Prostate gland (tissue), 2 donors: ENCODE measurements at regions of chr20 and their contacts with region 1.

Region 1: DNA sequence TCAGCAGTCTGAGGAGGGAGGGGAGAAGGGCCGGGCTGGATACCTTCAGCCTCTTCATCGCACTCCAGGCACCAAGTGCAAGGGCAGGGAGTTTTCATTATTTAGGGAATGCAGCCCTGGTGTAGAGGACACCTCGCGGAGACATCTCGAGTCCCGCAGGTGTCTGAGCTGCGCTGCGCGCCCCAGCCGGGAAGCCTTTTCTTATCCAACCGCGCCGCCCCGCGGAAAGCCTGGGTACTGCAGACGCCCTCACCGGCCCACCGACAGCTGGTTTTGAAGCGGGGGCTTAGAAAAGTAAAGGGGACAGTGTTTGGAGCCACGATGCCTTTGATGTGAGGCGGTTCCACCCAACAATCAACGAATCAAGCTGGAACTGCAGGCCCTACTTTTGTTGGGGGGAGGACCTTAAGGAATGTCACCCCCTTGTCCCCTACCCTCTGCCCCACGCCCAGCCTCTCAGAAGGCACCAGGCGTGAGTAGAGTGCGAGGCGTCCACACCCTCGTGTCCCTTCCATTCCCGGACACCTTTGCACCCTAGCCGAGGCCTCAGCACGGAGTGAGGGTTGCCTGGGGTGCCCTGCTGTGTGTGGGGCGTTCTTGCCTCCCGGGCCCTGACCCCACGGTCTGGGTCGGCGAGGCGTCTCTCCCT is 8.6 kb downstream of the NKX2-2 start:
- DNase-seq: peak; percentile 38
- H3K4me3 ChIP-seq: peak overlapping the region; percentile 10 to 21
- H3K27ac ChIP-seq: no peak overlapping the region
- H3K4me1 ChIP-seq: peaks cover 12% of the 10 kb centered on the region
- H3K27me3 ChIP-seq: peaks cover 31% of the 10 kb centered on the region
- CTCF ChIP-seq: peak; percentile 91 to 94 (median 92)
- POLR2A ChIP-seq: no peak

Region 2: DNA sequence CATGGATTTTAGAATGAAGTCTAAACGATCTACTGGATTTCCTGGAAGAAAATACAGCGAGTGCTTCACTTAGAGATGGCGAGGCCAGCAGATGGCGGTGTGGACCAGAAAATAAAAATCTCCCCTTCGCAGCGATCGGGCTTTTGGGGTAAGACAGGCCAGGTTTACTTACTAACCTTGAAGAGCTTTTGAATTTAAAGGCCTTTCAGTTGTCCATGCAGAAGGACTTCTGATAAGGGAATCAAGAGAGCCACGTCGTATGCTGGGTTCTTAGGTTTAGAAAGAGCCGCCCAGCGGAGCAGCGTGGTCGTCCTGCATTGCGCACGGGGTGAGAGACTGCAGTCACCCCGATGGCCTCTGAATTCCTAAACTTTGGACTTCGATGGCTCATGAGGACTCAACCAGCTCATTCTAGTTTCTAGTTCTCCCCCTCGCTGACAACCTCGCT is 667.7 kb before region 1 on chr20:
- intact Hi-C with region 1: loop called (anchors 10 kb)
- DNase-seq: peak; percentile 34
- H3K4me3 ChIP-seq: no peak overlapping the region
- H3K27ac ChIP-seq: no peak overlapping the region
- H3K4me1 ChIP-seq: no peaks in the 10 kb centered on the region
- H3K27me3 ChIP-seq: no peaks in the 10 kb centered on the region
- CTCF ChIP-seq: peak; percentile 25 to 65 (median 60)
- POLR2A ChIP-seq: no peak

Region 3: DNA sequence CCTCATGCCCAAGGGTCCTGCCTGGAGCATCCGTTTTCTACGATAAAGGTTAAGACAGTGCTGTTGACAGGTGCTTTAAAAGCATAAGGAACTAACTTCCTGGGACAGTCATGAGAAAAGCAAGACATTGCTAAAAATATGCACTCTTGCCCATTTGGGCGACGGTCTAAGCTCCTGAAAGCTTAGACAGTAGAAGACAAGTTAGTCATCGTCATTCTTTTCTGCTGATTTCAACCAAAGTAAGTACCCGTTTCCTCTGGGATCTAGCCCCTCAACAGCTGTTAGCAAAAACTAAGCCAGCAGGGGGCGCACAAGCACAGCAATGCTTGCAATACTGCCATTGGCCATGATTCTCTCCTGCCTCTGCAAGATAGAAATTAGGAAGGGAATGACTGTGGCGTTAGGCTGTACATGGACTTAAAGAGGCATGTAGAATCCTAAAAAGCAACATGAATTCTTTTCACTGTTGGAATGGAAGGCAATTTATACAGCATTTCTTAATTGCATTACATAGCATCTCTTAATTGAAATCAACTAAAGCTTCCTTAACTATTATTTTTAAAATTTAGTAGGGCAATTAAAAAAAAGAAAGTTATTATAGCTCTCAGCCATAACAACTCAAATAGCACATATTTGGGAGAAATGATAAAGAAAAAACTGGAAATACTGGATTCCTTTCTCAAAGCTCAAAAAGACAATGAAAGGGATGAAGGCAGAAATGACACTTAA is 645.0 kb before region 1 on chr20:
- intact Hi-C with region 1: loop called (anchors 2 kb)
- DNase-seq: peak; percentile 71
- H3K4me3 ChIP-seq: no peak overlapping the region
- H3K27ac ChIP-seq: no peak overlapping the region
- H3K4me1 ChIP-seq: no peaks in the 10 kb centered on the region
- H3K27me3 ChIP-seq: peaks cover 4% of the 10 kb centered on the region
- CTCF ChIP-seq: peak; percentile 56 to 90 (median 87)
- POLR2A ChIP-seq: no peak

Region 4: GRCh38 chr20:21214431-21214830 is 290.9 kb before region 1 on chr20:
- intact Hi-C with region 1: no loop called
- DNase-seq: no peak
- H3K4me3 ChIP-seq: no peak overlapping the region
- H3K27ac ChIP-seq: no peak overlapping the region
- H3K4me1 ChIP-seq: no peaks in the 10 kb centered on the region
- H3K27me3 ChIP-seq: no peaks in the 10 kb centered on the region
- CTCF ChIP-seq: no peak
- POLR2A ChIP-seq: no peak

Region 5: GRCh38 chr20:21235484-21236445 is 269.5 kb before region 1 on chr20:
- intact Hi-C with region 1: loop called (anchors 2 kb)
- DNase-seq: peak; percentile 70
- H3K4me3 ChIP-seq: no peak overlapping the region
- H3K27ac ChIP-seq: no peak overlapping the region
- H3K4me1 ChIP-seq: no peaks in the 10 kb centered on the region
- H3K27me3 ChIP-seq: no peaks in the 10 kb centered on the region
- CTCF ChIP-seq: peak; percentile 49 to 74 (median 63)
- POLR2A ChIP-seq: no peak